Stomach (tissue), 19 donors: ENCODE measurements at regions of chr6 and their contacts with region 1.

Region 1: DNA sequence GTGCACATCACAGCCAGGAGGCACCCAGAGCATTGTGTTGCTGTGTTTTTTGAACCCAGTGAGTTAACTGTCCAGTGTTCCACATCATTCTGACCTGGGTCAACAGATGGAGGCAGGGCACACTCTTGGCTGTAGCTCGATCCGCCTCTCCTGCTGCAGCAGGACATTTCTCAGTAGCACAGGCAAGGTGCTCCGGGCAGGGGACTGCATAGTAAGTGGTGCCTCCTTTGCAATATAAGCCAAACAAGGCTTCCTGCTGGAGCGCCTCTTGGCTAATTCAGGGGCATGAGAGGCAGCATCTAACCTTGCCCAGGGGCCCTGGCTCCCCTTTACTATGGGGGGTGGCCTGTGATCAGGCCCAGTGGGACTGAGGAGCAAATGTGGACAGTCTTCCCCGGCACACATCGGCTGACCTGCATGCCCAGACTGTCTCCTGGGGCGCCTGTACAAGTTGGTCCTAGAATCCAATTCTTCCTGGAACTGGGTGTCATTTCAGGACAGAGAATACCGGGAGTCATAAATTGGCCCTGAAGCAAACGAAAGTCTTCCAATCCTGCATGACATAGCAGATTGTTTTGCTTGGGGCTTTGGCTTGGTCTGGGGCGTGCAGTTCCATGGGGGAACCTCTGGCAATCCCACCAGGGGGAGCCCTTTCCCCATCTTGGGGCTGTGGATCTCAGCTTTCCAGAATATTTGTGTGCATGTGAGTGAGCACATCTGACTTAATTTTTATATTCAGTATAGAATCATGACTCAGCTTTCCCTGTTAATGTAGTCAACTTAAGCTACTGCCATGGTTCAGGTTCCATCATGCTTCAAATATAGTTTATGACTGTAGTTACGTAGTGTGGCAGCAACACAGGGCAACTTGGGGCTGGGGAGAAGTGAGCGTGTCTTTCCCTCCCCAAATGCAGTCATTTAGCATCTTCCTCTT is 56.0 kb upstream of the DDR1 start:
- DNase-seq: peak; percentile 90 to 94
- H3K4me3 ChIP-seq: peak overlapping the region in 2 of 4 donors; percentile 12 to 35
- H3K27ac ChIP-seq: peak overlapping the region; percentile 3 to 82 (median 75)
- H3K4me1 ChIP-seq: peaks cover 17 to 42% (median 24%) of the 10 kb centered on the region in 4 donors
- H3K27me3 ChIP-seq: no peaks in the 10 kb centered on the region
- CTCF ChIP-seq: peak in 5 of 7 experiments; percentile 82 to 98 (median 92)
- EP300 ChIP-seq: peak; percentile 57
- POLR2A ChIP-seq: no peak

Region 2: GRCh38 chr6:30616811-30617564 is 211.3 kb before region 1 on chr6 and contains the start of gene PPP1R10:
- intact Hi-C with region 1: no loop called
- DNase-seq: peak; percentile 99 to 100
- H3K4me3 ChIP-seq: peak within 1 kb of the TSS; percentile 66 to 94 (median 83)
- H3K27ac ChIP-seq: peak within 1 kb of the TSS; percentile 92 to 96 (median 95)
- H3K4me1 ChIP-seq: peaks cover 36 to 62% (median 41%) of the 10 kb centered on the region in 4 donors
- H3K27me3 ChIP-seq: no peaks in the 10 kb centered on the region
- CTCF ChIP-seq: no peak
- EP300 ChIP-seq: no peak
- POLR2A ChIP-seq: peak in 2 of 4 donors; percentile 99
- total RNA-seq, gene PPP1R10: 27.4 to 164 (median 50.1) TPM

Region 3: GRCh38 chr6:30742316-30743098 is 85.8 kb before region 1 on chr6 and contains the start of gene FLOT1:
- intact Hi-C with region 1: loop called (anchors 10 kb)
- DNase-seq: peak; percentile 98 to 99
- H3K4me3 ChIP-seq: peak within 1 kb of the TSS; percentile 58 to 87 (median 72)
- H3K27ac ChIP-seq: peak within 1 kb of the TSS; percentile 89 to 99 (median 96)
- H3K4me1 ChIP-seq: peaks cover 36 to 78% (median 75%) of the 10 kb centered on the region in 4 donors
- H3K27me3 ChIP-seq: no peaks in the 10 kb centered on the region
- CTCF ChIP-seq: no peak
- EP300 ChIP-seq: peak; percentile 20
- POLR2A ChIP-seq: peak in 1 of 4 donors; percentile 47
- total RNA-seq, gene FLOT1: 40.6 to 201 (median 74.7) TPM

Region 4: GRCh38 chr6:30870546-30870945 is 42.3 kb after region 1 on chr6:
- intact Hi-C with region 1: loop called (anchors 5 kb)
- DNase-seq: no peak
- H3K4me3 ChIP-seq: no peak overlapping the region
- H3K27ac ChIP-seq: no peak overlapping the region
- H3K4me1 ChIP-seq: peaks cover 0 to 3% (median 0%) of the 10 kb centered on the region in 4 donors
- H3K27me3 ChIP-seq: no peaks in the 10 kb centered on the region
- CTCF ChIP-seq: no peak
- EP300 ChIP-seq: no peak
- POLR2A ChIP-seq: no peak